ENCODE measurements at regions of chr2 and their contacts with region 1.

Region 1: DNA sequence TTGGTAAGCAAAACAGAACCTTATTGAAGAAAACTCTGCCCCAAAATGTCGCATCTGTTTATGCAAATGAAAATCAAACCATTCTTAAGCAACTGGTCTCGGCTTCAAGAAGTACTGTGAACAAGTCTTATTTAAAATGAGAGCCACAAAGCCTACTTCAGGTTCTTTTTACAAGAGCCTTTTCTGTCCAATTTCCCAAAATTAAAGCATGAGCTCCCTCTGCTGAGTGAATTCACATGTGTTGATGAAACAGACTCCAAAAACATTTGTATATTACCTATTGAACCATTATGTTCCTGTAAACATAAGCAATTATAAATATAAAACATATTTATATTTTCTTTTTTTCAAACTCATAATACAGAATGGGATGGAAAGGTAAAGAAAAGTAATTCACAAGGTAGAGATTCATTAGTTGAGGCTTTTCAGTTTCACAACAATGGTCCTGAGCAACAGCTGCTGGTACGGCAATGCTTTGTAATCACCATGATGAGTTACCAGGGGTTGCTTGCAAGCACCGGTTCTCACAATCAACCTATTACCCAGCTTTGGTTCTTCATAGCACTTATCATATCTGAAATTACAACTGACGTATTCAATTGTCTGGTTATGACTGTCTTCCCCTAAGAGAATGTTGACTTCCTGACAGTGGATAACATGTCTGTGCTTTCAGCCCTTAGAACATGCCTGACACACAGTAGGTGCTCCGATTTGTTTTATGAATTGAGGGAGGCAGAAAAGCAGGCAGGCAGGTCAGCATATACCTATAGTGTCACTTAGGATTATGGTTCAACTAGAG is 108.4 kb upstream of the BZW1 start:
- DNase-seq: peak; percentile 46
- ATAC-seq: no peak
- H3K4me3 ChIP-seq: no peak overlapping the region
- H3K4me3 Mint-ChIP-seq: no peak overlapping the region
- H3K27ac ChIP-seq: no peak overlapping the region
- H3K27ac Mint-ChIP-seq: no peak overlapping the region
- H3K4me1 ChIP-seq: no peaks in the 10 kb centered on the region
- H3K4me1 Mint-ChIP-seq: peaks cover 6% of the 10 kb centered on the region
- H3K27me3 ChIP-seq: no peaks in the 10 kb centered on the region
- H3K27me3 Mint-ChIP-seq: peaks cover 30% of the 10 kb centered on the region
- CTCF ChIP-seq: peak; percentile 40

Region 2: GRCh38 chr2:199979832-199980628 is 723.3 kb before region 1 on chr2:
- CTCF ChIA-PET with region 1: no interaction called
- POLR2A ChIA-PET with region 1: no interaction called
- intact Hi-C with region 1: loop called (anchors 5 kb)
- DNase-seq: peak; percentile 76
- ATAC-seq: no peak
- H3K4me3 ChIP-seq: no peak overlapping the region
- H3K4me3 Mint-ChIP-seq: no peak overlapping the region
- H3K27ac ChIP-seq: no peak overlapping the region
- H3K27ac Mint-ChIP-seq: no peak overlapping the region
- H3K4me1 ChIP-seq: no peaks in the 10 kb centered on the region
- H3K4me1 Mint-ChIP-seq: peaks cover 2% of the 10 kb centered on the region
- H3K27me3 ChIP-seq: peaks cover 0 to 2% (median 0%) of the 10 kb centered on the region in 4 experiments
- H3K27me3 Mint-ChIP-seq: no peaks in the 10 kb centered on the region
- CTCF ChIP-seq: peak; percentile 86

Region 3: GRCh38 chr2:200578778-200579177 is 124.5 kb before region 1 on chr2:
- CTCF ChIA-PET with region 1: interaction called, 4 read pairs
- POLR2A ChIA-PET with region 1: no interaction called
- intact Hi-C with region 1: loop called (anchors 1 kb)
- DNase-seq: peak; percentile 38
- ATAC-seq: peak; percentile 31
- H3K4me3 ChIP-seq: no peak overlapping the region
- H3K4me3 Mint-ChIP-seq: no peak overlapping the region
- H3K27ac ChIP-seq: no peak overlapping the region
- H3K27ac Mint-ChIP-seq: no peak overlapping the region
- H3K4me1 ChIP-seq: no peaks in the 10 kb centered on the region
- H3K4me1 Mint-ChIP-seq: no peaks in the 10 kb centered on the region
- H3K27me3 ChIP-seq: peaks cover 0 to 5% (median 0%) of the 10 kb centered on the region in 4 experiments
- H3K27me3 Mint-ChIP-seq: no peaks in the 10 kb centered on the region
- CTCF ChIP-seq: peak; percentile 46

Region 4: GRCh38 chr2:201007561-201007998 is 304.3 kb after region 1 on chr2:
- CTCF ChIA-PET with region 1: no interaction called
- POLR2A ChIA-PET with region 1: no interaction called
- intact Hi-C with region 1: no loop called
- DNase-seq: no peak
- ATAC-seq: no peak
- H3K4me3 ChIP-seq: no peak overlapping the region
- H3K4me3 Mint-ChIP-seq: no peak overlapping the region
- H3K27ac ChIP-seq: no peak overlapping the region
- H3K27ac Mint-ChIP-seq: no peak overlapping the region
- H3K4me1 ChIP-seq: no peaks in the 10 kb centered on the region
- H3K4me1 Mint-ChIP-seq: no peaks in the 10 kb centered on the region
- H3K27me3 ChIP-seq: no peaks in the 10 kb centered on the region
- H3K27me3 Mint-ChIP-seq: no peaks in the 10 kb centered on the region
- CTCF ChIP-seq: no peak